Activated CD4-positive, alpha-beta memory T cell treated with anti-CD3 and anti-CD28 coated beads, Interleukin-2, amount 10 ng/mL, durations not matched to agents 7 days and 5 days (primary cell): ENCODE measurements at regions of chrX and their contacts with region 1.

Region 1: DNA sequence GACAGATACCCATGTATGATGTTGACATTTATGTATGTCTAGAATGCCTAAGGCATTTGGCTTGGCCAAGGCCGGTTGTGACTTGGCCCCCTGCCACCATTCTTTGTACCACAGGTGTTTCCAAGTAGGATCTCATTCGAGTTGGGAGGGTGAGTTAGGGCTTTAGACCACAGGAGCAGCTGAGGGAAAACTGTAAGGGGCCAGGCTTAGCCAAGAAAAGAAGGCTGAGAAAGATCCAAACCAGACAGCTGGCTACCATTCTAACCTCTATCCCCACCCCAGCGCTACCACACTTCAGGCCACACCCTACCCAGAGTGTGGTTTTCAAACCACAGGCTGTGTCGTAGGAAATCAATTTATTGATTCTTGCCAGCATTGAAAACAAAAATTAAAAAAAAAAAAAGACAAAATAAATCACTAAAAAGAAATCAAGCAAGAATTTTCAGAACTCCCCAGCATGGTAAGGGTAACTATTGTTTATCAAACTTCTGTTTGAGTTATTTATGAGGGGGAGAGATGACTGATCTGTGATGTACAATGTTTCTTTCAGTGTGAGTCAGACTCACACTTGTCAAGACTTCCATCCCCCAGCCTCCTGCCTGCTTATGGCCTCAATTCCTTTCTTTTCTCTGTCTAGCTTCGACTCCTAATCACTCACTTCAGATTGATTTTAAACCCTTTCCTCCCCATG is 9.9 kb downstream of the TMSB4X start:
- DNase-seq: peak; percentile 72
- H3K4me3 Mint-ChIP-seq: peak overlapping the region; percentile 48
- H3K27ac Mint-ChIP-seq: peak overlapping the region; percentile 100
- H3K4me1 Mint-ChIP-seq: peaks cover 74% of the 10 kb centered on the region
- H3K27me3 Mint-ChIP-seq: no peaks in the 10 kb centered on the region

Region 2: DNA sequence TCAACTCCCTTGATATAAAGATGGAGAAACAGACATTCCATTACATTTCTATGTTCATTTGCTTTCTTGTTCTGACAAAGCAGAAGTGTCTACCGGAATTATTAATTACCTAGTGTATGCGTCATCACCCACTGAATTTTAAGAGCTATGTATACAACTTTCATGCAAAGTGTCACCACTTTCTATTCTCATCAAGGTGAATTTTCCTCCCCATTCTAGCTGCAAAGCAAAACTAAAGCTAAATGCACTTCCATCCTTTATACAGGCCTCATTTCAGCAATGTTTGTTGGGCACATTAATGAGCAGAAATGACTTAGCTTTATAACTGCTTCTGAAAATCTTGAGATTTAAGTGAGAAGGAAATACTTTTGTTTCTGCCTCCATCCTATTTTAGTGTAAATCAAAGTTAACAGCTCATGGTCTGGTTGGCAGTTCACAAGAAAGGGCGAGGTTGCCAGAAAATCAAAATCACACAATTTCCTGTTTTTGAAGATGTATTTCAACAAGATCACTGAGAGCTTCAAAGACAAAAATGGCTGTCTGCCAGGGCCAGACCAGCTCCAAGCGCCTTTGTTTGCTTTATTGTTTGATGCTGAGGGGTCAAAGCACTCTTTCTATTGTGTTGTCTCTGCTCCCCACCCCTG is 66.9 kb after region 1 on chrX:
- CTCF ChIA-PET with region 1: interaction called, 4 read pairs
- POLR2A ChIA-PET with region 1: interaction called, 22 read pairs
- DNase-seq: peak; percentile 20
- H3K4me3 Mint-ChIP-seq: no peak overlapping the region
- H3K27ac Mint-ChIP-seq: peak overlapping the region; percentile 92
- H3K4me1 Mint-ChIP-seq: peaks cover 65% of the 10 kb centered on the region
- H3K27me3 Mint-ChIP-seq: no peaks in the 10 kb centered on the region